CD8-positive, alpha-beta T cell (primary cell): ENCODE measurements at regions of chr14 and their contacts with region 1.

Region 1: GRCh38 chr14:61420326-61420725 is 98.9 kb downstream of the PRKCH start:
- DNase-seq: peak in 5 of 9 experiments; percentile 43 to 66 (median 55)
- ATAC-seq: peak; percentile 62
- H3K4me3 ChIP-seq: no peak overlapping the region
- H3K4me3 Mint-ChIP-seq: peak overlapping the region; percentile 61
- H3K27ac ChIP-seq: peak overlapping the region in 1 of 2 experiments; percentile 51
- H3K27ac Mint-ChIP-seq: peak overlapping the region; percentile 96
- H3K4me1 ChIP-seq: peaks cover 85% of the 10 kb centered on the region
- H3K4me1 Mint-ChIP-seq: peaks cover 89% of the 10 kb centered on the region
- H3K27me3 ChIP-seq: no peaks in the 10 kb centered on the region
- H3K27me3 Mint-ChIP-seq: no peaks in the 10 kb centered on the region
- CTCF ChIP-seq: no peak

Region 2: DNA sequence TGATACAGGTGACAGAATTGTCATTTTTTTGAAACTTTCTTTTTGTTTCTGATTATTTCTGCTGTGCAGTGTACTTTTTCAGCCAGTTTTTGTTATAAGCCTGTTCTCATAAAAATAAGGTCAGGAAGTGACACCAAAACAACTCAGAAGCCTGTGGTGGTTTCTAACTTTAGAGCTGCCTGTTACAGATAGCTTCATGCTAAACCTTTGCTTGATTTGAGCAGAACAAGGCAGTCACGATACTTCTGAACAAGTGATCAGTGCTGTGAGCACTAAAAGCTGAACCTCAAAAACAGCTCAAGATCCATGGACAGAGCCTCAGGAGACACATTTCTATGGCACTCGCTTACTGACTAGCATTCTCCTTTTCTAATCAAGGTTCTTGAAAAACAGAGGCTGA is 16.9 kb before region 1 on chr14:
- CTCF ChIA-PET with region 1: interaction called, 5 read pairs
- POLR2A ChIA-PET with region 1: interaction called, 7 read pairs
- intact Hi-C with region 1: loop called in 1 of 2 experiments (anchors 2 kb)
- DNase-seq: peak in 3 of 9 experiments; percentile 35 to 79 (median 63)
- ATAC-seq: peak; percentile 77
- H3K4me3 ChIP-seq: peak overlapping the region in 1 of 2 experiments; percentile 10
- H3K4me3 Mint-ChIP-seq: peak overlapping the region; percentile 62
- H3K27ac ChIP-seq: peak overlapping the region; percentile 15 to 82
- H3K27ac Mint-ChIP-seq: peak overlapping the region; percentile 95
- H3K4me1 ChIP-seq: peaks cover 89% of the 10 kb centered on the region
- H3K4me1 Mint-ChIP-seq: peaks cover 31% of the 10 kb centered on the region
- H3K27me3 ChIP-seq: no peaks in the 10 kb centered on the region
- H3K27me3 Mint-ChIP-seq: no peaks in the 10 kb centered on the region
- CTCF ChIP-seq: no peak

Region 3: GRCh38 chr14:61438860-61439684 is 18.7 kb after region 1 on chr14:
- CTCF ChIA-PET with region 1: interaction called, 4 read pairs
- POLR2A ChIA-PET with region 1: no interaction called
- intact Hi-C with region 1: loop called in 1 of 2 experiments (anchors 2 kb)
- DNase-seq: peak in 6 of 9 experiments; percentile 43 to 82 (median 59)
- ATAC-seq: peak; percentile 39
- H3K4me3 ChIP-seq: peak overlapping the region; percentile 19 to 34
- H3K4me3 Mint-ChIP-seq: peak overlapping the region; percentile 74
- H3K27ac ChIP-seq: peak overlapping the region; percentile 31 to 79
- H3K27ac Mint-ChIP-seq: peak overlapping the region; percentile 91
- H3K4me1 ChIP-seq: peaks cover 93% of the 10 kb centered on the region
- H3K4me1 Mint-ChIP-seq: peaks cover 91% of the 10 kb centered on the region
- H3K27me3 ChIP-seq: no peaks in the 10 kb centered on the region
- H3K27me3 Mint-ChIP-seq: no peaks in the 10 kb centered on the region
- CTCF ChIP-seq: no peak